Sigmoid colon (tissue), 7 donors: ENCODE measurements at regions of chr7 and their contacts with region 1.

Region 1: DNA sequence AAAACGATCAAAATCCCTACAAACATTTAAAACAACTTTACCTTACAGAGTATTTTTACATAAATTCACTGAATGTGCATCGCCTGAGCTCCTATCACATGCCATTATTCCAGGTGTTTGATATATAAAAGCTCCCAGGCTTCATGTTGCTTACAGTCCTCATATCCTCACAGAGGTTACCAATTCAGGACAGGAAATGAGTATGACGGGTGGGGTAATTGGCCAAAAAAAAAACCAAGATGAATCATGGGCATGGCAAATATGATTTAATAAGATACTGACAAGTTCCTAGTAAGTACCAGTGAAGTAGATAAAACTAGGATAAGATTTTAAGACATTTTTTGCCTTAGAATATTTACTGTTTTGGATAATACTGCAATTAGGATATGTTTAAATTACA is 135.8 kb downstream of the KMT2E start:
- DNase-seq: no peak
- H3K4me3 ChIP-seq: no peak overlapping the region
- H3K27ac ChIP-seq: no peak overlapping the region
- H3K4me1 ChIP-seq: no peaks in the 10 kb centered on the region
- H3K27me3 ChIP-seq: no peaks in the 10 kb centered on the region
- CTCF ChIP-seq: no peak
- EP300 ChIP-seq: no peak
- POLR2A ChIP-seq: no peak

Region 2: GRCh38 chr7:105429746-105430612 is 280.2 kb after region 1 on chr7:
- intact Hi-C with region 1: loop called (anchors 10 kb)
- DNase-seq: no peak
- H3K4me3 ChIP-seq: no peak overlapping the region
- H3K27ac ChIP-seq: no peak overlapping the region
- H3K4me1 ChIP-seq: no peaks in the 10 kb centered on the region
- H3K27me3 ChIP-seq: no peaks in the 10 kb centered on the region
- CTCF ChIP-seq: peak in 3 of 4 experiments; percentile 21 to 31 (median 26)
- EP300 ChIP-seq: no peak
- POLR2A ChIP-seq: no peak

Region 3: DNA sequence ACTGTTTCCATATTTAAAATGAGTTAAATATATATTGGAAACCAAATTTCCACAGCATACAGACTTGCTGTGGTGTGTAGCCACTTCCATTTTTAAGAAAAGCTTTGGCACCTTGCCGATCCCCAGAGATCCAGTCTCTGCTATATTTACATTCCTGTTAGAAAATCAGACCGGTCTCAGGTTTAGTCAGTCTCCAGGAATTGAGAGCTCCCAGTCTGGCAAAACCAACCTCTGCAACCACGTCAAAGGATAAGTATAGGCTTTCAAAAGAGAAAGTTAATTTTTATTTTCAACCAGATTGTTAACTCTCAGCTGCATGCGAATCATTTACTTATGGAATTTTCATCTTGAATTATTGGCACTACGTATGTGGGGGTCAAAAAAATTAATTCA is 344.1 kb after region 1 on chr7:
- intact Hi-C with region 1: loop called (anchors 10 kb)
- DNase-seq: no peak
- H3K4me3 ChIP-seq: peak overlapping the region in 3 of 4 donors; percentile 7 to 33 (median 19)
- H3K27ac ChIP-seq: peak overlapping the region; percentile 54 to 77 (median 68)
- H3K4me1 ChIP-seq: peaks cover 0 to 12% (median 7%) of the 10 kb centered on the region in 4 donors
- H3K27me3 ChIP-seq: no peaks in the 10 kb centered on the region
- CTCF ChIP-seq: no peak
- EP300 ChIP-seq: no peak
- POLR2A ChIP-seq: no peak